ENCODE measurements at regions of chr10 and their contacts with region 1.

Region 1: GRCh38 chr10:58334817-58335305 is at the start of gene UBE2D1:
- DNase-seq: peak; percentile 85 to 95 (median 92)
- H3K4me3 ChIP-seq: peak within 1 kb of the TSS; percentile 62 to 99 (median 91)
- H3K27ac ChIP-seq: peak within 1 kb of the TSS in 56 of 59 donors; percentile 18 to 91 (median 75)
- H3K27me3 ChIP-seq: peaks cover 0 to 3% (median 0%) of the 10 kb centered on the region in 45 donors
- CTCF ChIP-seq: peak in 39 of 56 donors; percentile 1 to 57 (median 31)
- total RNA-seq, gene UBE2D1: 8.7 to 27.7 (median 17.2) TPM

Region 2: GRCh38 chr10:58268870-58269605 is 65.8 kb before region 1 on chr10 and contains the start of gene CISD1:
- intact Hi-C with region 1: loop called in 1 of 2 experiments (anchors 5 kb)
- DNase-seq: peak; percentile 83 to 95 (median 93)
- H3K4me3 ChIP-seq: peak within 1 kb of the TSS; percentile 70 to 98 (median 91)
- H3K27ac ChIP-seq: peak within 1 kb of the TSS; percentile 76 to 98 (median 94)
- H3K27me3 ChIP-seq: no peaks in the 10 kb centered on the region
- CTCF ChIP-seq: peak in 21 of 56 donors; percentile 4 to 46 (median 14)
- total RNA-seq, gene CISD1: 25.5 to 115 (median 77.2) TPM

Measured in dorsolateral prefrontal cortex (tissue), 120 donors.